ENCODE measurements at regions of chr14 and their contacts with region 1.

Region 1: DNA sequence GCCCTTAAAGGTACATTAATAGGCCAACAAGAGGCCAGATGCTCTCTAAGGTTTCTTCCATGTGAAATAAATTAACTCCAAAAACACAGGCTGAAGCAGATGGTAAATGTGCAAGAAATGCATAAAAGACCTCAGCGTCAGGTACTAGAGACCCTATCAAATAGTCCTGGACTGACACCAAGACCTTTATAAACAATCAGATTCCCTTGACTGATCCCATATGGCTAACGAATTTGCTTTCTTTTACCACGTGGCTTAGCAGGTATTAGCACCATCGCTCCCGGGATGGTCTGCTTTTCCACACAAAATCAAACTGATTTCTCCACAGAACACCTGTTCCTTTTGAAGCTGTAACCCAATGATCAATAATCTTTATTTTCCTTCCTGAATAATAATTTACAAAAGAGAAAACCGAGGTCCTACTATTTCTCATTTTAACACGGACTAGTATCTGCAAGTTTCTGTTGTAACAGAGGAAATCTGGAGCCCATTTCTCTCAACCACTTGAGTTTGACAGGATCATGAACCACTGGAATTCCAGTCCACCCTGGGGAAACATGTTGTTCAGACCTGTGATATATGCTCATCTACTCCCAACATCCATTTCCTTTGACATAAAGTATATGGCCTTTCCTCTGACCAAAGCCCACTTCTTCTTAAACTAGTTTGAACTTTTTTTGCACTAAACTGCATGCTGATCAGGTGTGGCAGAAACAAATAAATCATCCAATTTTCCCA is 48.2 kb upstream of the DAAM1 start:
- DNase-seq: no peak
- ATAC-seq: no peak
- H3K4me3 ChIP-seq: no peak overlapping the region
- H3K27ac ChIP-seq: no peak overlapping the region
- H3K4me1 ChIP-seq: no peaks in the 10 kb centered on the region
- H3K27me3 ChIP-seq: no peaks in the 10 kb centered on the region
- CTCF ChIP-seq: no peak
- POLR2A ChIP-seq: no peak

Region 2: GRCh38 chr14:59123975-59124374 is 16.3 kb before region 1 on chr14:
- intact Hi-C with region 1: no loop called
- DNase-seq: no peak
- ATAC-seq: no peak
- H3K4me3 ChIP-seq: no peak overlapping the region
- H3K27ac ChIP-seq: no peak overlapping the region
- H3K4me1 ChIP-seq: no peaks in the 10 kb centered on the region
- H3K27me3 ChIP-seq: no peaks in the 10 kb centered on the region
- CTCF ChIP-seq: peak in 7 of 12 donors; percentile 10 to 48 (median 25)
- POLR2A ChIP-seq: no peak

Region 3: DNA sequence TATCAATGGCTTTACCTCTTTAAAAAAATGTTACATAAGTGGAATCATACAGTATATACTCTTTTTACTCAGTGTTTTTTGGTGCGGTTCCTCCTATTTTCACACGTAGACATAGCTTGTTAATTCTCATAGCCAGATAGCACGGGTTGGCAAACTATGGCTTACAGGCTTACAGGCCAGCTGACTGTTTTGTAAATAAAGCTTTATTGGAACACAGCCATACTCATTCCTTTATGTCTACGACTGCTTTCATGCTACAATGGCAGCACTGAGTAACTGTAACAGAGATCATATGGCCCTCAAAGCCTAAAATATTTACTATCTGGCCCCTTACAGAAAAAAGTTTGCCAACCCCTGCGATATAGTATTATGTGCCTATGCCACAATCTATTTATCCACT is 42.4 kb after region 1 on chr14:
- intact Hi-C with region 1: loop called in 4 of 10 experiments (anchors 5 kb)
- DNase-seq: no peak
- ATAC-seq: no peak
- H3K4me3 ChIP-seq: no peak overlapping the region
- H3K27ac ChIP-seq: no peak overlapping the region
- H3K4me1 ChIP-seq: peaks cover 0 to 6% (median 3%) of the 10 kb centered on the region in 12 donors
- H3K27me3 ChIP-seq: peaks cover 0 to 3% (median 0%) of the 10 kb centered on the region in 9 donors
- CTCF ChIP-seq: no peak
- POLR2A ChIP-seq: no peak

Measured in heart left ventricle (tissue), 16 donors.